ENCODE measurements at regions of chr14 and their contacts with region 1.

Region 1: DNA sequence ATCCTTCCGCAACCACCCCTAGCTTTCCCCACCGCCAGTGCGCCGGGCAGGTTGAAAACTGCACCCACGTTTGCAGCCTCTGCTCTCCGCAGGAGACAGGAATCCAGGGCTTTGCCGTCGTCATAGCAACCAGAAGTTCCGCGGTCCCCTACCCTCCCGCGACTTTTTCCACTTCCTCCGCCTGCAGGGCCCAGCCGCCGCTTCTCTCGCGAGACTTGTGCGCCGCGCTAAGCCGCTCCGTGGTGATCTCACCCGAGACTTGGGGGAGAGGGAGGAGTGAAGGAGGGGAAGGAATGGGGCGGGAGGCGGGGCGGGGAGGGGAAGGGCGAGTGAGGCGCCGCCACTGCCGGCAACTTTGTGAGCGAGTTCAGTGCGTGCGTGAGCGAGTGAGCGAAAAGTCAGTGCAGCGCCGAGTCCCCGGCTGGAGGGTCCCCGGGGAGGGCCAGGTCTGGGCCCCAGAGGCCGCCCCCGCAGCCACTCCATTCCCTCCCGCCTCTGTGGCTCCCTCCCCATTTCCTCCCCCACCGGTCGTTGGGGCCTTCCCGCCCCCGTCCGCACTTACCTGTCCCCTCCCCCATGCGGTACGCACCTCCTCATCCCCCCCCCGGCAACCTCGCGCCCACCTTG is 413.0 kb downstream of the PCNX1 start:
- DNase-seq: peak; percentile 99
- H3K4me3 ChIP-seq: peak within 1 kb of the TSS; percentile 92
- H3K27ac ChIP-seq: peak within 1 kb of the TSS; percentile 79
- H3K4me1 ChIP-seq: peaks cover 40% of the 10 kb centered on the region
- CTCF ChIP-seq: no peak

Region 2: GRCh38 chr14:71103662-71104484 is 216.3 kb before region 1 on chr14:
- CTCF ChIA-PET with region 1: no interaction called
- POLR2A ChIA-PET with region 1: no interaction called
- intact Hi-C with region 1: loop called (anchors 1 kb)
- DNase-seq: peak; percentile 80
- H3K4me3 ChIP-seq: no peak overlapping the region
- H3K27ac ChIP-seq: no peak overlapping the region
- H3K4me1 ChIP-seq: no peaks in the 10 kb centered on the region
- CTCF ChIP-seq: peak; percentile 99

Region 3: DNA sequence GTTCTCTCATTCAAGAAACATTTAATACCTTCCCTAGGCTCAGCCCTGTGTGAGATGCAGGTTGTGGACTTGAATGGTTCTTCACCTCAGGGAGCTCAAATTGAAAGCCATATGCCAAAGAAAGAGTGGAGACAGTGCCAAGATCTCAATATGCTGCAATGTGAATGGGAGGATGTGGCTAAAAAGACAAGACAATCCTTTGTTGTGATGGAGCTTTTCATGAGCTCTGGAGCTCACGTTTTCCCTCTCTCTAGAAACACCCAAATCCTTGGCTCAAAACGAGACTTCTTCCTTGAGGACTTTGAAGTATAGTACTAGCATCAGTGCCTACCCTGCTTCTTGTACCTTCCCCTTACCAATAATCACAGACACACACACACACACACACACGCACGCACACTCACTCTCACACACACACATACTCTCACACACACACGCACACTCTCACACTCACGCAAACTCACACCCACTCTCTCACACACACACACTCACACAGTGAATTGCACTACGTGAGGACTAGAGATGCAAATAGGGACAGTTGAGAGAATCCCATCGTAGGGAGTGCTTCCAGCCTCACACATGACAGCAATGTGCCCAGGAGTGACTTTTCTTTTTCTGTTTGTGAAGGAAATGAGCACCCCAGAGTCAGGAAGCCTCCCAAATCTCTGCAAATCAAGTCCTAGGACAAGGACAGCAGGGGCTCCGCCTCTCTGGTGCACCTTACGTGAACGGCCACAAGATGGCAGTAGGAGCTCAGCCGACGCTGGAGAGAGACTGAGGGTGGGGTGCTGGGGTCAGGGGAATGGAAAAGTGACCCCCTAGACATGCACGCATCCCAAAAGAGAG is 181.5 kb before region 1 on chr14:
- CTCF ChIA-PET with region 1: no interaction called
- POLR2A ChIA-PET with region 1: interaction called, 4 read pairs
- intact Hi-C with region 1: loop called (anchors 1 kb)
- DNase-seq: peak; percentile 77
- H3K4me3 ChIP-seq: no peak overlapping the region
- H3K27ac ChIP-seq: no peak overlapping the region
- H3K4me1 ChIP-seq: peaks cover 31% of the 10 kb centered on the region
- CTCF ChIP-seq: peak; percentile 96

Region 4: GRCh38 chr14:71555654-71556559 is 235.7 kb after region 1 on chr14:
- CTCF ChIA-PET with region 1: no interaction called
- POLR2A ChIA-PET with region 1: interaction called, 8 read pairs
- intact Hi-C with region 1: loop called (anchors 2 kb)
- DNase-seq: peak; percentile 93
- H3K4me3 ChIP-seq: peak overlapping the region; percentile 54
- H3K27ac ChIP-seq: peak overlapping the region; percentile 96
- H3K4me1 ChIP-seq: peaks cover 79% of the 10 kb centered on the region
- CTCF ChIP-seq: no peak

Region 5: GRCh38 chr14:71855399-71856036 is 535.3 kb after region 1 on chr14:
- CTCF ChIA-PET with region 1: no interaction called
- POLR2A ChIA-PET with region 1: no interaction called
- intact Hi-C with region 1: loop called (anchors 10 kb)
- DNase-seq: peak; percentile 70
- H3K4me3 ChIP-seq: peak overlapping the region; percentile 22
- H3K27ac ChIP-seq: peak overlapping the region; percentile 62
- H3K4me1 ChIP-seq: peaks cover 19% of the 10 kb centered on the region
- CTCF ChIP-seq: peak; percentile 97

Region 6: GRCh38 chr14:72308967-72309485 is 988.8 kb after region 1 on chr14:
- CTCF ChIA-PET with region 1: no interaction called
- POLR2A ChIA-PET with region 1: no interaction called
- intact Hi-C with region 1: no loop called
- DNase-seq: no peak
- H3K4me3 ChIP-seq: no peak overlapping the region
- H3K27ac ChIP-seq: no peak overlapping the region
- H3K4me1 ChIP-seq: no peaks in the 10 kb centered on the region
- CTCF ChIP-seq: no peak